Cardiac septum (tissue), 1 donor: ENCODE measurements at regions of chr18 and their contacts with region 1.

Region 1: DNA sequence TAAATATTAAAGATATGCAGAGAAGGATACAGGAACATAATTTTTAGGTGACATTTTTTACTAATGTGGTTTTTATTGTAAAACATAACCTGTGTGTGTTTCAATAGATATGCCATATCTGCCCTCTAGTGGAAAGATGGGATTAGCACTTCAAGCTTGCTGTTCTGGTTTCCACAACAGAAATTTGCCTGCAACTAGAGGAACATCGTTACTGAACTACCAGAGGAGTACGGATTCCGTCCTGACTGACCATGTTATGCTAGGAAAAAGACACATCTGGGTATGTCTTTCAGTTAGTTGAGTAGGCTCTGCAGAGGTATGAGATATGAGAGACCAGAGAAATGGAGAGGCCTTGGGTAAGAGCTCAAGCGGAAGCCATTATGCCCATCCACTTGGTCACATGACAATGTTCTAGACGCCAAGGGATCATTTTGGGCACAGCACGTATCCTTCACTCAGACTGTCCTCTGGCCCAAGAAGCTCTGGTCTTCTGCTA is 104.9 kb downstream of the MBD2 start:
- DNase-seq: no peak

Region 2: GRCh38 chr18:53567929-53568574 is 551.5 kb before region 1 on chr18:
- intact Hi-C with region 1: loop called (anchors 10 kb)
- DNase-seq: no peak

Region 3: DNA sequence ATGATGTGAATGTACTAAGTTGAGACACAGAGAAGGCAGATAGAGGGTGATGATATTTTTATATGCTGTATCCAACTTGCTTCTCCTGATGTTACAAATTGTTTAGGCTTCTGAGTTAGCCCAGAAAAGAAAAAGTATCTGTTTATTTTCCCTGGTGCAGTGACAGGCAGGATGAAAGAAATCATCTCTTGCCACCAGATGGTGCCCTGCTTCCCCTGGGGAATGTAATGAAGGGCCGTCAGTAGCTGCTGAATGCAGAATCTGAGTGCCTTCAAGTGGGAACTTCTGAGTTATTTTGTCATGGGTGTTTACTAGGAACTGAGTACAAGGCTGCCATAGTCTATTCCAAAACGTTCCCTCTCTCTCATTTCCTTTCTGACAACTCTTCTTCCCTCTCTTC is 420.7 kb before region 1 on chr18:
- intact Hi-C with region 1: loop called (anchors 2 kb)
- DNase-seq: no peak